Colonic mucosa (tissue), 4 donors: ENCODE measurements at regions of chr5 and their contacts with region 1.

Region 1: GRCh38 chr5:163695830-163696578 is 190.6 kb downstream of the MAT2B start:
- DNase-seq: peak; percentile 39
- H3K4me3 ChIP-seq: no peak overlapping the region
- H3K27ac ChIP-seq: no peak overlapping the region
- H3K4me1 ChIP-seq: no peaks in the 10 kb centered on the region
- H3K27me3 ChIP-seq: no peaks in the 10 kb centered on the region
- CTCF ChIP-seq: peak; percentile 64

Region 2: GRCh38 chr5:163445345-163445744 is 250.7 kb before region 1 on chr5:
- intact Hi-C with region 1: no loop called
- DNase-seq: no peak
- H3K4me3 ChIP-seq: no peak overlapping the region
- H3K27ac ChIP-seq: no peak overlapping the region
- H3K4me1 ChIP-seq: peaks cover 4% of the 10 kb centered on the region
- H3K27me3 ChIP-seq: no peaks in the 10 kb centered on the region
- CTCF ChIP-seq: no peak

Region 3: DNA sequence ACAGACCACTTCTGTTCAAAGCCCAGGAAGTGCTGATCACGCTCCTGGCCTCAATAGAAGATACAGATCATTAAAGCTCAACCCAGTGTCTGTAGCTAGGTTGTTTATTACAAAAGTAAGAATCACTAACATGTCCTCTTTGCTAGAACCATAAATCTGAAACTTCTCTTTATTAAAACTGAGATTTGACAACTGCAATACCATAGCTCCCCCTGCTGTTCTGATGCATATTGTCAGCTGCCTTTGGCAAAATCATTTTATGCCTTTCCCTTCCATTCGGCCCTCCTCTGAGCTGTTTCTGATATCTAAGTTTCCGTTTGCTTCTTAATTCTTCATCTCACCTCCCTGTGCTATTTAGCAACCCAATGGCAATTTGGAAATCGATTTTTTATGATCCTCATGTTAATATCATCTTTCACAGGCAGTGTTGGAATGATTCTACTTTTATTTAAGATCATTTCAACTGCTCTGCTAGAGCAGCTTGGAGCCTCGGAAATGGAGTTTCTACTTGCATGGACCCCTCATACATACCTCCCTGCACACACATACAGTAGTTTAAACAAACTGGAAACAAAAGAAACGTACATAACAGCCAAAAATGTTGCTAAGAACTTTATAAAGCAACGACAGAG is 808.3 kb after region 1 on chr5:
- intact Hi-C with region 1: loop called (anchors 5 kb)
- DNase-seq: peak; percentile 37
- H3K4me3 ChIP-seq: no peak overlapping the region
- H3K27ac ChIP-seq: no peak overlapping the region
- H3K4me1 ChIP-seq: no peaks in the 10 kb centered on the region
- H3K27me3 ChIP-seq: no peaks in the 10 kb centered on the region
- CTCF ChIP-seq: peak; percentile 64